Ovary (tissue), 10 donors: ENCODE measurements at regions of chr18 and their contacts with region 1.

Region 1: GRCh38 chr18:23883277-23883790 is 131.2 kb upstream of the TTC39C start:
- DNase-seq: no peak
- H3K4me3 ChIP-seq: no peak overlapping the region
- H3K27ac ChIP-seq: peak overlapping the region in 1 of 2 donors; percentile 36
- H3K4me1 ChIP-seq: peaks cover 6% of the 10 kb centered on the region
- H3K27me3 ChIP-seq: no peaks in the 10 kb centered on the region
- CTCF ChIP-seq: no peak
- EP300 ChIP-seq: no peak
- POLR2A ChIP-seq: no peak

Region 2: DNA sequence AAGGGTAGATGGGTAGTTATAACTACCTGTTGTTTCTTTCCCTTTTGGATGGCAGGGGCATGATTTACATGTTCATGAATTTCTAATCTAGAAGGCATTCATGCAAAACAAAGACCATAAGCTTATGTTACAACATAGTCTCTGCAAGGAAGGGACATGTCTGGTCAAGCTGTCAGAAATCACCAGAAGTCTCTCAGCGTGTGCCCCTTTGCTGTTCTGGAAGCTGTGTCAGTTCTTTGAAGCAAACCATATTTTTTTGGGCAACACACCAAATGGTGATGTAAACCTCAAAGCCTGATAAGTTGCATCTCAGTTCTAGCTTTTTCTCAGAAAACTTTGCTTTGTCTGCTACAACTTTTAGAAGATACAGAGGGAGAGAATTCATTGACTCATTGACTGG is 1292.1 kb before region 1 on chr18:
- intact Hi-C with region 1: no loop called
- DNase-seq: no peak
- H3K4me3 ChIP-seq: no peak overlapping the region
- H3K27ac ChIP-seq: no peak overlapping the region
- H3K4me1 ChIP-seq: no peaks in the 10 kb centered on the region
- H3K27me3 ChIP-seq: no peaks in the 10 kb centered on the region
- CTCF ChIP-seq: no peak
- EP300 ChIP-seq: no peak
- POLR2A ChIP-seq: no peak

Region 3: DNA sequence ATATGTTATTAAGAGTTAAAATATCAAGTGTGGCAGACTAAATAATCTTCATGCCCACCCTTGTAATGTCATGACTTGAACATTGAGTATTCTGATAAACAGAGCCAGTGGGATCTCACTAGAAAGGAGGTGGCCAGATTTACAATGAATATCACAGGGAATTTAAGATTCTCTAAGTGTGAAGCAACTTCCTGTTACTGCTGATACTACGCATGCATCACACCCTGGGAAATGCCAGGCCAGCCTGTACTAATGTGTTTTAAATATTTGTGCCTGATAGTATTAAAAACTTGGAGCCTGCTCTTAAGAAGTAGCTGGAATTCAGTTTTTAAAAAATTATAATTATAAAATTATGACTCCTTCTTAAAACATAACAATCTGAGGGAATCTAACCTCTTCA is 45.7 kb before region 1 on chr18:
- intact Hi-C with region 1: loop called in 1 of 4 experiments (anchors 5 kb)
- DNase-seq: peak in 1 of 5 donors; percentile 31
- H3K4me3 ChIP-seq: no peak overlapping the region
- H3K27ac ChIP-seq: no peak overlapping the region
- H3K4me1 ChIP-seq: no peaks in the 10 kb centered on the region
- H3K27me3 ChIP-seq: no peaks in the 10 kb centered on the region
- CTCF ChIP-seq: no peak
- EP300 ChIP-seq: no peak
- POLR2A ChIP-seq: no peak